GM13977 (cell line): ENCODE measurements at regions of chr9 and their contacts with region 1.

Region 1: DNA sequence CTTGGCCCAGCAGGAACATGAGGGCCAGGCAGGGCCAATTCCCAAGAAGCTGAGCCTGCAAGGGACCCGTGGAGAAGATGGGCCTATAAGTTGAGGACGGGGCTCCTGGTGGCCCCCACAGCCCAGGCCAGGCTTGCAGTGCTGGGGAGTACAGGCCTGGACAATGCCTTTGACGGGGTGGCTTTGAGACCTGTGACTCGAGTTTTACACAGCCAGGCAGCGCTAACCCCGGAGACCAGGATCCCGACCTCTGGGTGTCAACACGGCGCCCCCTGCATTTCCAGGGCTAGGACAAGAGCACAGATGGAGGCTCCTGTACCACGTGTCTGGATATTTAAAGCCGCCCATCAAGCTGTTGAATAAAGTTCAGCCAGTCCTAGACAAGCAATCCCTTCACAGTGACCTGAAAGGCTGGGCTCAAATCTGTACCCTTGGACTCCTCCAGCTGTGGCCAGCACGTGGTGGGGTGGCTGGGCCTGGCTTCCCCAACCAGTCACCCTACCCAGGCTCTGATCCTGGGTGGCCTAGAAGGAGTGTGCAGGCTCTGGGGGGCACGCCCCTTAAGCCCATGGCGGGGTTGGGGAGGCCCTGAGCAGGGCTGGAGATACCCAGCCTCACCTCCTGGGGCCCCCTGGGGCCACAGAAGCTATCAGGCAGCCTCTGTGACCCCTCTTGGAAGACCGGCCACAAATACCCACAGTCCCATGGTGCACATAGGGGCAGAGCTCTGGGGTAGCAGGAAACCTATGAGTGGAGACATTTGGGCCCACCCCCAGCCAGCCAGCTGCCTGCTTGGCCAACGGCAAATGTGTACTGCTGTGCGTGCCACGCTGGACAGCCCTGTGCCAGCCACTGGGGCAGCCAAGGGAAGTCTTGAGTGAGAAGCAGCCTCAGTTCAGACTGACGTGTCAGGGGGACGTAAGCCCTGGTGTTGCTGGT is 88.7 kb downstream of the NTNG2 start:
- DNase-seq: no peak
- CTCF ChIP-seq: no peak

Region 2: GRCh38 chr9:131762356-131762932 is 488.1 kb before region 1 on chr9:
- in situ Hi-C with region 1: loop called (anchors 10 kb)
- DNase-seq: peak; percentile 91
- CTCF ChIP-seq: peak; percentile 96

Region 3: DNA sequence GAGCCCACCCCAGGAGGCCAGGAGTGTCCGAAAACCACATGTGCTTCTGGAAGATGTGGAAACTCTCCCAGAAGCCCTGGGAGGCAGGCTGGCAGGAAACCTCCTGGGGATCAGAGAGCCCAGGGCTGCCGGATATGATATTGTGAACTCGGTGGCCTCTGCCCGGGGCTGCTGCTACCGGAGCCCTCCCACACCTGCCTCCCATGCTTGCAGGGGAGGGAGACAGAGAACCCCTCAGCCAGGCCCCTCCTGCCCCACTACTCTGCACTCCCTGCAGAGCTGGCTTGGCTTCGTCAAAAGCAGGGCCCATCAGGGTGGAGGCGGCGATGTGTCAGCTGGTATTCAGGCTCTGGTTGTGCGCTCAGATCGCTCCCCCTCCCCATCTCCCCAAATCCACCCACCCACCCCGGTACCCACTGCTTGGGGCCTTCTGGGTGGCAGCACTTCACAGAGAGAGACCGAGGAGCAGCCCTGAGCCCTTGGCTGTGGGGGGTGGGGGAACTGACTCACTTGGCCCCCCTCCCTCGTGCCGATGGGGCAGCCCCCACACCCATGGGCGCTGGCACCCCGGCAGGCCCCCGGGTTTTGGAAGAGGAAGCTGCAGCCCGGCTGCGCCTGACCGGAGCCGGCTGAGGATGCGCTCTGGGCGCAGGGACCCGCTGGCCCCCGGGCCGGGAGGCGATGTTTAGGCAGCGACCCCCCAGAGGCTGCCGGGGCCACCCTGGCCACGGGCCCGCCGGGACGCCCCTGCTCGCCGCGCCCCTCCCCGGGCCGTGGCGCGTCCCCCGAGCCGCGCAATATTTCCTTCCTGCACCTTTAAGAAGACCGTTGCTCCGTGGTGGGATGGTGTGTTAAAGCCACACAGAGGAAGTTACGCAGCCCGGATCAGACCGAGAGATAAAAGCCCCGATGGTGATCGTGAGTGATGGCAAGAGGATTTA is 89.5 kb before region 1 on chr9:
- in situ Hi-C with region 1: no loop called
- DNase-seq: peak; percentile 67
- CTCF ChIP-seq: no peak